ENCODE measurements at regions of chr6 and their contacts with region 1.

Region 1: GRCh38 chr6:56902641-56903464 is 52.1 kb upstream of the BEND6 start:
- DNase-seq: no peak
- H3K4me3 Mint-ChIP-seq: no peak overlapping the region
- H3K27ac Mint-ChIP-seq: no peak overlapping the region
- H3K4me1 Mint-ChIP-seq: peaks cover 2% of the 10 kb centered on the region
- H3K27me3 Mint-ChIP-seq: peaks cover 17% of the 10 kb centered on the region

Region 2: DNA sequence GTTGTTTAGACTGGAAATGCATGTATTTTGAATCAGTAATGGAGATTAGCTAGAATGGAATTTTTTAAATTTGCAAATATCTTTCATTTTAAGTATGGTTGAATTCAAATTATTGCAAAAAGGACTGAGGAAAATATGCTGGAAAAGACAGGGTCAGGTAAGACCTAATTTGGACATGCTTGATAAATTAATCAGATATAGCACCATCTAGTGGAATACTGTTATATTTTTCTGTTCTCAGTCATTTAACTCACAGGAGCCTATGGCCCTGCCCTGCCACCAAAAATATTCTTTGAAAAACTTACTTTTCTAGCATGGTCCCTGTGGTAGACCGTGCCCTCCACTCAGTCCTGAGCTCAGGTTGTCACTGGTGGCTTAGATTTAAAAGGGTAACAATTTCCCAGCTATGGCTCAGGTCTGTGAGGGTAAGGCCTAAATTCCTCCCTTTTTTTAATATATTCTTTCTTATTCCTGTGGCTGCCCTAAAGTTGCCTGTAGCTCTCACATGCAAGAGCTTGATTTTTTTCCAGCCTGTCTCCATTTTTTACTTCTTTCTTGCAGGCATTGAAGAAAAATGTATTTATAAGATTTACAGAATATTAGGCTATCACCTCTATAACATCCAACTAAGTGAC is 118.3 kb after region 1 on chr6:
- intact Hi-C with region 1: loop called (anchors 1 kb)
- DNase-seq: no peak
- H3K4me3 Mint-ChIP-seq: no peak overlapping the region
- H3K27ac Mint-ChIP-seq: no peak overlapping the region
- H3K4me1 Mint-ChIP-seq: no peaks in the 10 kb centered on the region
- H3K27me3 Mint-ChIP-seq: peaks cover 19% of the 10 kb centered on the region

Measured in activated CD4-positive, alpha-beta T cell treated with anti-CD3 and anti-CD28 coated beads, Interleukin-2, amount 10 ng/mL, durations not matched to agents 24 days and 14 days (primary cell).